Heart left ventricle (tissue), 16 donors: ENCODE measurements at regions of chr10 and their contacts with region 1.

Region 1: DNA sequence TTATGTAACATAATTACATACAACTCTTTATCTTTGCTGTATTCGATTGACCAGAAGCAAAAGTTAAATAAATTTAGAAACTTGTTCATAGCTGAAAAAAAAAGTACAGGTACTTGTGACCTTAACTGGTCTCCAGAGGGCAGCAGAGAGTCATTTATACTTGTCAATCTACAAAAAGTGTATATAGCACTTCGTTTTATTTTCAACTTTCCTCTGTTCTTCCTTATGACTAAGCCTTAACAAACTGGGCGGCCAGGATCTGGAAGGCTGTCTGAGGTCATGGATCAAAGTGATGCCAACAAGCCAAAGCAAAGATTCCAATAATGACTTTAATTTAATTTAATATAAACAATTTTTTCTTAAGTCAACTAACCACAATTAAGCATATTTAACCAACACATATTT is 29.8 kb downstream of the C10orf67 start:
- DNase-seq: peak in 3 of 5 donors; percentile 38 to 51 (median 49)
- ATAC-seq: peak in 3 of 4 donors; percentile 50 to 59 (median 54)
- H3K4me3 ChIP-seq: no peak overlapping the region
- H3K27ac ChIP-seq: no peak overlapping the region
- H3K4me1 ChIP-seq: peaks cover 0 to 6% (median 0%) of the 10 kb centered on the region in 12 donors
- H3K27me3 ChIP-seq: no peaks in the 10 kb centered on the region
- CTCF ChIP-seq: peak; percentile 61 to 85 (median 76)
- POLR2A ChIP-seq: no peak

Region 2: DNA sequence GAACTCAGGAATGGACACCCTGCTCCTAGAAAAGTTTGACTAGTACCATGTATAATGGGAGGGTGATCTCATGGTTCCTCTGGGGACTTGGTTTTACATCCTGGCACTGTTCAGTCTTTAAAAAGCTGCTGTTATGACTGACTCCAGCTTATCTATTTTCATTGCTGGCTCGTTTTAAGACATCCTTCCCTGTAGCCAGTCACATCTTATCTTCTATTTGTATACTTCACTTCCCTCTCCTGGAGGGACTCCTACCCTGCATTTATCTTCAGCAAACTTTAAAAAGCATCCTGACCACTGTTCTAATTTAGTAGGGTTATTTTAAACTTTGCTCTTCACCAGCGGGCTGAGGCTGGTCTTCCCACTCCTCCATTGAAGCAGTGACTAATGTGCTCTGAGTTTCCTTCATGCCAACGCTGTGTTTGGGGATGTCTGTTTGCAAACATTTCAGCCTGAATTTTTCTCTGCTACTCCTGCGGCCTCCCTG is 459.9 kb before region 1 on chr10:
- intact Hi-C with region 1: no loop called
- DNase-seq: peak in 1 of 5 donors; percentile 52
- ATAC-seq: peak; percentile 89 to 98 (median 95)
- H3K4me3 ChIP-seq: no peak overlapping the region
- H3K27ac ChIP-seq: peak overlapping the region in 10 of 12 donors; percentile 2 to 89 (median 44)
- H3K4me1 ChIP-seq: peaks cover 0 to 24% (median 7%) of the 10 kb centered on the region in 12 donors
- H3K27me3 ChIP-seq: no peaks in the 10 kb centered on the region
- CTCF ChIP-seq: peak in 8 of 12 donors; percentile 13 to 48 (median 24)
- POLR2A ChIP-seq: no peak

Region 3: DNA sequence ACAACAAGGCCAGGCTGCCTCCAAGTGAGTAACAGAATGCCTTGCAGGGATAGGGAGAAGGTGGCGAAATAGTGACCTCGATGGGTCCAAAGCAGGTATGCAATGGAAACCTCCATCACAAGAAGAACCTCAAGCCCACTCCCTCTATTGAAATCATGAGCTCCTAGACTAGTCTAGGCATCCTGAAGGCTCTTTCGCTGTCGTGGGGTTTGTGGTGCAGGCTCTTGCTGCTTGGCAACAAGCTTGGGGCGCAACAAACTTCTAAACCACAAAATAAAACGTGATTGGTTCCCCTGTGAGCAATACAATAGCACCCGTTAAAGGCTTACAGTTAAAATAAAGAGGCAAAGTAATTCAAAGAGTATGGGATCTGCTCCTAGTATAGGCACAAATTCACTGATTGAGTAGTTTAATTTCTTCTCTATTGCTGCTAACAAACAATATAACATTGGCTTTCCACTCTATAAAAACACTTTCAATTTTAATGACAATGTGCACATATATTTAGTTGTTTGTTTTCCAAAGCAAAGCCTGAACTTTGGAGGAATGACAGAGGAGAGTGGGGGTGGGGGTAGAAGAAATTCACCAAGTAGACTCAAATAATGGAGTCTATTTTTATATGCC is 34.3 kb before region 1 on chr10:
- intact Hi-C with region 1: no loop called
- DNase-seq: no peak
- ATAC-seq: no peak
- H3K4me3 ChIP-seq: no peak overlapping the region
- H3K27ac ChIP-seq: no peak overlapping the region
- H3K4me1 ChIP-seq: no peaks in the 10 kb centered on the region
- H3K27me3 ChIP-seq: peaks cover 0 to 11% (median 0%) of the 10 kb centered on the region in 9 donors
- CTCF ChIP-seq: no peak
- POLR2A ChIP-seq: no peak

Region 4: GRCh38 chr10:23656735-23657134 is 341.9 kb after region 1 on chr10:
- intact Hi-C with region 1: loop called in 1 of 10 experiments (anchors 5 kb)
- DNase-seq: no peak
- ATAC-seq: no peak
- H3K4me3 ChIP-seq: no peak overlapping the region
- H3K27ac ChIP-seq: no peak overlapping the region
- H3K4me1 ChIP-seq: no peaks in the 10 kb centered on the region
- H3K27me3 ChIP-seq: peaks cover 0 to 11% (median 0%) of the 10 kb centered on the region in 9 donors
- CTCF ChIP-seq: peak in 11 of 12 donors; percentile 21 to 55 (median 45)
- POLR2A ChIP-seq: no peak

Region 5: DNA sequence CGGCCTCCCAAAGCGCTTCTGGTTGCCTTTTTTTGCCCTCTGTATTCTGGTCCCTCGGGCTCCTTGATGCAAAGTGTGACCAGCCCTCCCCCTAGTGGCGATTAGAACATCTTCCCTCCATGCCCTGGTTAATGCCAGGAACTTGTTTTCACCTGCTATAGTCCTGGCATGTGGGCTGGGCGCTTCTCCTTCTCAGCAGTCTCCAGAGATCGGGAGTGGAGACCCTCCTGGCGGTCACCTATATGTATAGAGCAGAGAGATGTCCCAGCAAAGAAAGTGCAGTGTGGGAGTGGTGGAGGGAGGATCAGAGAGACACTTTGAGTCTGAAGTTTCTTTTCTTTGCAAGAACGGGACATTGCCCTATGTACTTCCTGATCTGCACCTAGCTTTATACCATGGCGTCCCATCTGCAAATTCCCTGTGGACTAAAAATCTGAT is 388.2 kb after region 1 on chr10:
- intact Hi-C with region 1: loop called in 7 of 10 experiments (anchors 2 to 10 kb)
- DNase-seq: peak; percentile 27 to 62 (median 42)
- ATAC-seq: peak in 3 of 4 donors; percentile 58 to 83 (median 81)
- H3K4me3 ChIP-seq: no peak overlapping the region
- H3K27ac ChIP-seq: no peak overlapping the region
- H3K4me1 ChIP-seq: no peaks in the 10 kb centered on the region
- H3K27me3 ChIP-seq: peaks cover 0 to 15% (median 4%) of the 10 kb centered on the region in 9 donors
- CTCF ChIP-seq: peak; percentile 57 to 73 (median 63)
- POLR2A ChIP-seq: no peak